ENCODE measurements at regions of chr16 and their contacts with region 1.

Region 1: GRCh38 chr16:8788578-8789172 is 8.8 kb downstream of the TMEM186 start:
- DNase-seq: no peak
- ATAC-seq: no peak
- H3K4me3 ChIP-seq: no peak overlapping the region
- H3K27ac ChIP-seq: no peak overlapping the region
- H3K4me1 ChIP-seq: no peaks in the 10 kb centered on the region
- H3K27me3 ChIP-seq: no peaks in the 10 kb centered on the region
- CTCF ChIP-seq: no peak

Region 2: DNA sequence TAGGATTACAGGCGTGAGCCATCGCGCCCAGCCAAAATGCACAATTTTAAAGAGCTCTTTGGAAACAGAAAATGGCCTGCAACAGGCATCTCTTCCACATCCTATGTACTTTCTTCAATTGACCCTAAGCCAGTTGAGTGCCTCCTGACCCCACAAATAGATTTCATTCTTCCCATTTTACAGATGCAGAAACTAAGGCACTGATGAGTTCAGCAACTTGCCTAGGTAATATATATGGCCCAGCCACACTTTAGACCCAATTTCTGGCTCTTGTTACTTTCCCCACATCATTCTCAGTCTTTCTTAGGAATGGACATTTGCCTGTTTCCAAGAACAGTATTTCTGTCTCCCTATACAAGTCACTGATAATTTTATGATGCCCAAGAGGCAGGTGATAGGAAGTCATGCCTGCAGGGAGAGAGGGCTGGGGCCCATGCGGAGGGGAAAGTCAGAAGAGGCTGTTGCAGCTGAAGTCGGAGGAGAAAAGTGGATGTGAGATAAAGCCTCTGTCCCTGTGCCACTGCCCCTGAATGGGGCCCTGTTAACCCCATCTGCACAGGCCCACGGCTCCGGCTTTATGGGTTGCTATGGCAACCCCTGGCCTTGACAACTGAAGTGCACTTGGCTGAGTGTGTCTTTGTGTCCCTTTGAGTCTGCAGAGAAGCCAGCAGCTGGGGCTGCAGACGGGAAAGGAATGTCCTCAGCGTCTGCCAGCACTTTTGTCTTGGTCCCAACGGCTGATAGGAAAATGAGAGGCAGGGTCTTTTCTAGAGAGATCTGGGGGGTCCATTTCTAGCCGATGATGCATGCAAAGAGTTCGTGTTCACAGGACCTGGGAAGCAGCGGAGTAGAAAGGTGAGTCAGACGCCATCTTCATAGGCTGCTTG is 68.4 kb before region 1 on chr16:
- intact Hi-C with region 1: loop called (anchors 10 kb)
- DNase-seq: no peak
- ATAC-seq: no peak
- H3K4me3 ChIP-seq: no peak overlapping the region
- H3K27ac ChIP-seq: no peak overlapping the region
- H3K4me1 ChIP-seq: no peaks in the 10 kb centered on the region
- H3K27me3 ChIP-seq: no peaks in the 10 kb centered on the region
- CTCF ChIP-seq: no peak

Region 3: DNA sequence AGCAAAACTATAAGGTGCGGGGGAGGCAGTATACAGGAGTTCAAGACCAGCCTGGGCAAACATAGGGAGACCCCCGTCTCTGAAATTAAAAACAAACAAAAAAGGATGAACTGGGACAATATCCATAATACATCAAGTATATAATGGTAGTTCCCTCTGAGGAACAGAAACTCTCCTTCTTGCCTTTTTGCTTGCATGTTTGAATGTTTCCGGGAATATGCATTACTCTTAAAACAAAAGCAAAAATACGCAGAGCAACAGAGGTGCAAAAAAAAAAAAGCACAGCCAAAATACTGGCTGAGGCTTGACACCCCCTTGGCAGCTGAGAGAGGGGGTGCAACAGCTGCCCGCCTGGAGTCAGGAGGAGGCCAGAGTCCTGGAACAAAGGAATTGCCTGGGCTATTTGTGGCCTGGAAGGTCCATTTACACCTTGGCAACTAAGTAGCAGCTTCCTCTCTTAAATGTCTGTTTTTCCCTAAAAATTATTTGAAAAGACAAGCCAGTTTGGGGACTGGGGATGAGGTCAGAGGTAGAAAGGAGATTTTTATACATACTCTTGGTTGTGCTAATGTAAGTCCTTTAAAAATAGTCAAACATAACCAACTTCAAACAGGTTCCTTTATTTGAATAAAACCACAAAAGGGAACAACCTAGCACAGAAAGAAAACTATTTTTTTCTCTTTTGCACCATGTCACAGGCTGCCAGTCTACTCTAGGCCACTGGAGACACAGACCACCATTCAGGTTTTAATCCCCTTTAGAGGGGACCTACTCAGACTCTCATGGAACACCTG is 155.5 kb after region 1 on chr16:
- intact Hi-C with region 1: no loop called
- DNase-seq: no peak
- ATAC-seq: peak; percentile 32
- H3K4me3 ChIP-seq: no peak overlapping the region
- H3K27ac ChIP-seq: no peak overlapping the region
- H3K4me1 ChIP-seq: peaks cover 57% of the 10 kb centered on the region
- H3K27me3 ChIP-seq: no peaks in the 10 kb centered on the region
- CTCF ChIP-seq: no peak

Region 4: GRCh38 chr16:9395958-9396359 is 607.3 kb after region 1 on chr16:
- intact Hi-C with region 1: no loop called
- DNase-seq: no peak
- ATAC-seq: no peak
- H3K4me3 ChIP-seq: no peak overlapping the region
- H3K27ac ChIP-seq: no peak overlapping the region
- H3K4me1 ChIP-seq: no peaks in the 10 kb centered on the region
- H3K27me3 ChIP-seq: no peaks in the 10 kb centered on the region
- CTCF ChIP-seq: no peak

Measured in upper lobe of right lung (tissue), 1 donor.